ENCODE measurements at regions of chr9 and their contacts with region 1.

Region 1: DNA sequence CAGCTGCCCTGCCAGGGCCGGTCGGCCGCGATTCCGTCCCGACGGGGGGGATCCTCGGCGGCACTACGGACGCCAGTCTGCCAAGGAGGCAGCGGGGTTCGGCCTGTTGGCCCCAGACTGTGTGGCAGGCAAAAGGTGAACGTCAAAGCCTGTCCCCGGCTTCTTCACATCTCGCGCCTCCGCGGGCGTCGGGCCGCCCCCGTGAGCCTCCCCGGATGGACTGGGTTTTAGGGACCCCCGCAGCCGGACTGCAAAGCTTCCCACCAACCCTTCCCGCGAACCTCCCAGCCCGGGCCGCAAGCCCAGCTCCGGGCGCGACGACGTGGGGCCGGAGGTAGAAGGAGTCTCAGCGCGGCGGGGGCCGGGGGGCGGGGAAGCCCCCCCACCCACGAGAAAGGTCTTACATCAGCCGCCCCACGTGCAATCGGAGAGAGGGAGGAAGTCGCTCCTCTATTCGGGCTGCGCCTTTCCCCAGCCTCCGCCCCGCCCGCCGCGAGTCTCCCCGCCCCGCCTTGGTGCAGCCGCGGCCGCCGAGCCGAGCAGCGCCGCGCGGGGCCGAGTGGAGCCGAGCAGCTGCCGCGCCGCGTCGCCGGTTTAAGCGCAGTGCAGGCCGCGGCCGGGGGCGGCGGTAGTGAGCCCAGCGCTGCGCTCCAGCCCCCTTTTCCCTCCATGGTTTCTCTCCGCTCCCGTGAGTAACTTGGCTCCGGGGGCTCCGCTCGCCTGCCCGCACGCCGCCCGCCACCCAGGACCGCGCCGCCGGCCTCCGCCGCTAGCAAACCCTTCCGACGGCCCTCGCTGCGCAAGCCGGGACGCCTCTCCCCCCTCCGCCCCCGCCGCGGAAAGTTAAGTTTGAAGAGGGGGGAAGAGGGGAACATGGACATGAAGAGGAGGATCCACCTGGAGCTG is at the start of gene ANP32B:
- DNase-seq: peak; percentile 82 to 90 (median 86)
- H3K4me3 ChIP-seq: peak within 1 kb of the TSS; percentile 82 to 95 (median 95)
- H3K4me3 Mint-ChIP-seq: peak within 1 kb of the TSS; percentile 83 to 90
- H3K27ac ChIP-seq: peak within 1 kb of the TSS; percentile 83 to 87
- H3K27ac Mint-ChIP-seq: peak within 1 kb of the TSS; percentile 59 to 89 (median 85)
- H3K4me1 ChIP-seq: peaks cover 28 to 43% of the 10 kb centered on the region in 2 donors
- H3K4me1 Mint-ChIP-seq: peaks cover 31% of the 10 kb centered on the region
- H3K27me3 ChIP-seq: peaks cover 0 to 8% of the 10 kb centered on the region in 2 donors
- H3K27me3 Mint-ChIP-seq: peaks cover 3 to 6% (median 3%) of the 10 kb centered on the region in 3 donors
- CTCF ChIP-seq: peak; percentile 97
- polyA plus RNA-seq, gene ANP32B: 29.7 to 40.7 (median 30.8) TPM

Region 2: DNA sequence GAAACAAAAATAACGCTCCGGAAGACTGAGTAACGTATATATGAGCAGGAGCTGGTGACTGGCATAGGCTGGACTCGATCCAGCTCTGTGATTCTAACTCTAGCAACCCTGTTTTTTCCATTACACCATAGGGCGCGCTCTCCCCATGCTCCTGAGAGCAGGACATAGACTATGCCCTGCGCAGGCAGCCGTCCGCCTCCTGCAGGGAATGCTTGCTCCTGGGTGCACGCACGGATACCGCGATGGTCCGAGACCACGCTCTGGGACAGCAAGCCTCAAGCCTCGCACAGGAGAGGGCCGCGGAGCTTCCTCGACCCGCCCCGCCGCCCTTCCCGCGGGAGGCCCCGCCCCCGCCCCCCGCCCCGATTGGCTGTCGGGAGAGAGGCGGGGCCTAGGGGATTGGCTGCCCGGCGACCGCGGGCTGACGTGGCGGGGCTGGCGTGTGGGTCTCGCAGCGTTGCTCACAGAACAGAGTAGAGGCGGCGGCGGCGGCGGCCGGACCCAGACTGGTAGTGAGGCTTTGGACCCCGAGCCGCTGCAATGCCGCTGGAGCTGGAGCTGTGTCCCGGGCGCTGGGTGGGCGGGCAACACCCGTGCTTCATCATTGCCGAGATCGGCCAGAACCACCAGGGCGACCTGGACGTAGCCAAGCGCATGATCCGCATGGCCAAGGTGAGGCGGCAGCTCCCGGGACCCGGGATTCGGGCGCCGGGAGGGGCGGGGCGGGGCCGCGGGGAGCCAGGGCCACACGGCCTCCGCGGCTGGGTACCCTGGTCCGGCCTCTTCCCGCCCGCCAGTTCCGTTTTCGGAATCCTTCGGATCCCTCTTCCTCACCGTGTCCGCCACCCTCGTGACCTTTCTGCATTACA is 73.6 kb after region 1 on chr9 and contains the start of gene NANS:
- intact Hi-C with region 1: loop called in 1 of 2 experiments (anchors 10 kb)
- DNase-seq: peak; percentile 88 to 92 (median 90)
- H3K4me3 ChIP-seq: peak within 1 kb of the TSS; percentile 69 to 99 (median 90)
- H3K4me3 Mint-ChIP-seq: peak within 1 kb of the TSS; percentile 99
- H3K27ac ChIP-seq: peak within 1 kb of the TSS; percentile 90 to 95
- H3K27ac Mint-ChIP-seq: peak within 1 kb of the TSS; percentile 96 to 99 (median 98)
- H3K4me1 ChIP-seq: peaks cover 23 to 24% of the 10 kb centered on the region in 2 donors
- H3K4me1 Mint-ChIP-seq: peaks cover 32% of the 10 kb centered on the region
- H3K27me3 ChIP-seq: no peaks in the 10 kb centered on the region
- H3K27me3 Mint-ChIP-seq: no peaks in the 10 kb centered on the region
- CTCF ChIP-seq: no peak
- polyA plus RNA-seq, gene NANS: 41.3 to 109 (median 95.9) TPM

Region 3: DNA sequence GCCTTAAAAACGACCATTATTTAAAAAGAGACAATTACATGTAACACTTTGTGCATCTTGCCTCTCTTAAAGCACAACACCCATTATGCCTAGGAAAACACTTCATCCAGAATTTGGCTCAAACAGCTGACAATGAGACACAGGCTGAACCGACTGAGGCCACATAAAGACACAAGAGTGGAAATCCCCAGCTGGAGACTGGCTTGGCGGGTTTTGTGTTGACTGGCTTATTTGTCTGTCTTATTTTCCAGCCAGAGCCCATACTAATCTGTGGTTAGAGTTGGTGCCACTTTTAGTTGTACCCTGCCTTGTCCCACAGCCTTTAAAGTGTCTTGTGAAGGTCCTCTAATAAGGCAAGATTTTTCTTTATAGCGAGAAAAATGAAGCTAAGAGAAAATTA is 114.9 kb after region 1 on chr9:
- intact Hi-C with region 1: no loop called
- DNase-seq: no peak
- H3K4me3 ChIP-seq: no peak overlapping the region
- H3K4me3 Mint-ChIP-seq: no peak overlapping the region
- H3K27ac ChIP-seq: no peak overlapping the region
- H3K27ac Mint-ChIP-seq: no peak overlapping the region
- H3K4me1 ChIP-seq: peaks cover 14 to 15% of the 10 kb centered on the region in 2 donors
- H3K4me1 Mint-ChIP-seq: peaks cover 21% of the 10 kb centered on the region
- H3K27me3 ChIP-seq: no peaks in the 10 kb centered on the region
- H3K27me3 Mint-ChIP-seq: no peaks in the 10 kb centered on the region
- CTCF ChIP-seq: no peak

Region 4: DNA sequence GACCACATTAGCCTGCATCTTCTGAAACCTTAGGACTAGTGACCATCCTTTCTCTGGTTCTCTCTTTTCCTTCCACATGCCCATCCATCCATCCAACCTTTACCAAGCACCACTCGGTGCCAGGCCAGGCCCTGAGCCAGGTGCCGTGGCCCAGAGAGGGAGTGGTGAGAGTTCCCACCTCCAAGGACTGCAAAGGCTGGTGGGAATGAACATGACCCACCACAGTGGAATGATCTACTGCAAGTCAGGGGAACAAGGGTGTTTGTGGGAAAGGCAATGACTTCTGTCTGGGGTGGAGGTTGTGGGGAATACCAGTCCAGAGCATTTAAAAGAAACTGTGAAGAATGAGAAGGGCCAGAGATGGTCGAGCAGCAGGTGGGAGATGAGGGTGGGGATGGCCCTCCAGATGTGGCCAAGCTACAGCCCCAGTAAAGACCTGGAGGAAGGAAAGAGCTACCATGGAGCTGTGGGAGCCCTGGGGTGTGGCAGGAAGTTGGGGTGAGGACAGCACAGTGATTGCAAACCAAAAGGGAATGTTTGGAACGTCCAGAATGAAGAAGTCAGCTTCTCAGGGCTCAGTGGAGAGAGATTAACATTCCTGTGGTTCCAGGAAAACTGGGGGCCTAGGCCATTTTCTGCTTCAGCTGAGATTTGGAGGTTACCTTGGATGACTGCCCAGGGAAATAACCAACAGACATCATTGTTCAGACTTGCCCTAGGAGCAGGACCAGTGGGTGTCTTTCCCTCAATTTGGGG is 240.1 kb after region 1 on chr9:
- intact Hi-C with region 1: no loop called
- DNase-seq: no peak
- H3K4me3 ChIP-seq: no peak overlapping the region
- H3K4me3 Mint-ChIP-seq: no peak overlapping the region
- H3K27ac ChIP-seq: peak overlapping the region; percentile 17 to 83
- H3K27ac Mint-ChIP-seq: peak overlapping the region; percentile 22 to 91 (median 70)
- H3K4me1 ChIP-seq: peaks cover 8 to 12% of the 10 kb centered on the region in 2 donors
- H3K4me1 Mint-ChIP-seq: peaks cover 13% of the 10 kb centered on the region
- H3K27me3 ChIP-seq: no peaks in the 10 kb centered on the region
- H3K27me3 Mint-ChIP-seq: peaks cover 0 to 1% (median 0%) of the 10 kb centered on the region in 3 donors
- CTCF ChIP-seq: no peak